Activated naive CD4-positive, alpha-beta T cell treated with anti-CD3 and anti-CD28 coated beads for 36 hours (primary cell): ENCODE measurements at regions of chr6 and their contacts with region 1.

Region 1: GRCh38 chr6:42043787-42044475 is 6.4 kb upstream of the TAF8 start:
- DNase-seq: peak; percentile 98
- H3K4me3 Mint-ChIP-seq: peak overlapping the region; percentile 75
- H3K27ac Mint-ChIP-seq: peak overlapping the region; percentile 97
- H3K4me1 Mint-ChIP-seq: peaks cover 81% of the 10 kb centered on the region
- H3K27me3 Mint-ChIP-seq: no peaks in the 10 kb centered on the region

Region 2: DNA sequence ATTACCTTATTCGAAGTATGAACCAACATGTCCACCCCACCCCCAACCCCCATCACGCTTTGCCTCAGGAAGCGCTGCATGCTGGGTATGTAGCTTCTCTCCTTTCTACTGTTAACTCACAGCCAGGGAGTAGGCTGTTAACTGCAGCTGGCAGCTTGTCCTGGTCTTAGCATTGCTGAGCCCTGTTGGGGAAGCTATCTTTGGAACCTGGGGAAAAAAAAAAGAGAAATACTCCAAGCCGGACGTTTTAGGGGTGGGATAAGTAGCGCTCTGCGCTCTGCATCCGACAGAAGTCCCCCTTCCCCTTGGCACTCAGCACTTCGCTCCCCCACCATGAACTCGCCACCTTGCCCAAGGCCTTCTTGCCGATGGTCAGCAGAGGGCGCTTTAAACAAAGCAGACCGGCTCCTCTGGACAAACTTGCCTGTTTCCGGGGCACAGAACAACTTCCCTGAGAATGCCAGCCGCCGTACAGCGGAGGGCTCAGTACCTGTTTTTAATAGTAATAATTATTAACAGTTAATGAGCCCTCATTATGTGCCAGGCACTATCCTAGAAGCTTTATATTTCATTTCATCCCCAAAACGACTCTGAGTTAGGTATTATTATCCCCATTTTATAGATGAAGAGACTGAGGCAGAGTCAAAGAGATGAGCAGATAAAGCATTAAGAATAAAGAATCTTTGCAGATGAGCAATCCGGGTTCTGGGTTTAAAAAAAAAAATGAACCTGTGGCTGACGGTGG is 440.9 kb before region 1 on chr6:
- CTCF ChIA-PET with region 1: no interaction called
- intact Hi-C with region 1: loop called (anchors 10 kb)
- DNase-seq: peak; percentile 90
- H3K4me3 Mint-ChIP-seq: no peak overlapping the region
- H3K27ac Mint-ChIP-seq: no peak overlapping the region
- H3K4me1 Mint-ChIP-seq: peaks cover 4% of the 10 kb centered on the region
- H3K27me3 Mint-ChIP-seq: no peaks in the 10 kb centered on the region

Region 3: DNA sequence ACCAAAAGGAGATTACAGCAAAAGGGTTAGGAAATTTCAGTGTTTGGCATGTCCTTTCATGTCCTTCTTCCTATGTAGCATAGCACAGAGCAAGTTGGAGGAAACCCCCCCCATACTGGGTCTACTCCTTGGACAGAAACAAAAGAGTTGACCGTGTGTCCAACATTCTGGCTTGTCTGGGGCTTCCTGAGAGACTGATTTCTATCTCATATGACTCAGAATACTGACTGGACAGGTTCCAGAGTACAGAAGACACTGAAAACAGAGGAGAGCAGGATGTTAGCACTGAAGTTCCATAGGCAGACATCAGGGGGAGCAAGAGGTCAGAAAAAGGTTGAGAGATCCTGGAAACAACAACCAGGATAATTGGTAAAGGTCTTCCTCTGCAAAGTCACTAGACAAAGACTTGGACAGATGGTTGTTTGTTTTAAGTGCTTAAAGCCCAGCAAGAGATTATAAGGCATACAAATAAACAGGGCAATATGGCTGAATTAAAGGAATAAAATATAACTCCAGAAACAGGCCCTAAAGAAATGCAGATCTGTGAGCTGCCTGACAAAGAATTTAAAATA is 197.2 kb before region 1 on chr6:
- CTCF ChIA-PET with region 1: interaction called, 75 read pairs
- intact Hi-C with region 1: loop called (anchors 1 kb)
- DNase-seq: peak; percentile 81
- H3K4me3 Mint-ChIP-seq: no peak overlapping the region
- H3K27ac Mint-ChIP-seq: no peak overlapping the region
- H3K4me1 Mint-ChIP-seq: peaks cover 5% of the 10 kb centered on the region
- H3K27me3 Mint-ChIP-seq: no peaks in the 10 kb centered on the region

Region 4: DNA sequence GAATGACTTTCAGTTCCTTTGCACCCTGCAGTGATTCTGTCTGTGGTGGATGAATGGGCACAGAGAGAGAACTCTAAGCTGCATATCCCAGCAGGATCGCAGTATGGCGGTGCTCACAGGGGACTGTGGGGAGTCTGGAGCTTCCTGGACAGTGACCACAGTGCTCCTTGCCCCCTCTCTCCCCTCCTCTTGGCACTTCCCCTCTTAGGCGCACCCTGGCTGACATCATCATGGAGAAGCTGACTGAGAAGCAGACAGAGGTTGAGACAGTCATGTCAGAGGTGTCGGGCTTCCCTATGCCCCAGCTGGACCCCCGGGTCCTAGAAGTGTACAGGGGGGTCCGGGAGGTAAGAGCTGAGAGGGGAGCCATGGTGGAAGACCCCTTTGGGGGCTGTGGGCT is 114.0 kb before region 1 on chr6:
- CTCF ChIA-PET with region 1: interaction called, 296 read pairs
- intact Hi-C with region 1: no loop called
- DNase-seq: no peak
- H3K4me3 Mint-ChIP-seq: no peak overlapping the region
- H3K27ac Mint-ChIP-seq: peak overlapping the region; percentile 61
- H3K4me1 Mint-ChIP-seq: peaks cover 30% of the 10 kb centered on the region
- H3K27me3 Mint-ChIP-seq: no peaks in the 10 kb centered on the region

Region 5: DNA sequence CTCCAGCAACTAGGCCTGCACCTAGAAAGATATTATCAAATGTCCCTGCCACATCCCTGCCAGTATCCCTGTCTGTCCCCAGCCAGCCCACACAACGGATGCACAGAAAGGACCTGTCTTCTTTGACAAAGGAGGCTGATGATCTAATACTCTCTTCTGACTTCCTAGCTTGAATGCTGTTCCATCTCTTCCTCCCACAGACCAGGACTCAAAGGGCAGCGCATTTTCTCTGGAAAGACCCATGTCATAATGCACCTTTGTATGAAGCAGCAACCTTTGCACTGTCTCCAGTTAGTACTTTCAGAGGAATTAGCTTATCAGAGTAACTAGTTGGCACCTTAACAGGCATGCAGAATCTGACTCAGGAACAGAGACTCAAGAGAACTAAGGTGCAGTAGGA is 46.9 kb before region 1 on chr6:
- CTCF ChIA-PET with region 1: interaction called, 10 read pairs
- intact Hi-C with region 1: no loop called
- DNase-seq: no peak
- H3K4me3 Mint-ChIP-seq: no peak overlapping the region
- H3K27ac Mint-ChIP-seq: peak overlapping the region; percentile 78
- H3K4me1 Mint-ChIP-seq: peaks cover 50% of the 10 kb centered on the region
- H3K27me3 Mint-ChIP-seq: no peaks in the 10 kb centered on the region

Region 6: GRCh38 chr6:42166444-42167141 is 122.7 kb after region 1 on chr6:
- CTCF ChIA-PET with region 1: interaction called, 3 read pairs
- intact Hi-C with region 1: loop called (anchors 1 kb)
- DNase-seq: peak; percentile 91
- H3K4me3 Mint-ChIP-seq: no peak overlapping the region
- H3K27ac Mint-ChIP-seq: no peak overlapping the region
- H3K4me1 Mint-ChIP-seq: no peaks in the 10 kb centered on the region
- H3K27me3 Mint-ChIP-seq: no peaks in the 10 kb centered on the region